Gastrocnemius medialis (tissue), 4 donors: ENCODE measurements at regions of chr16 and their contacts with region 1.

Region 1: GRCh38 chr16:21584817-21585216 is 14.6 kb upstream of the METTL9 start:
- DNase-seq: no peak
- ATAC-seq: no peak
- H3K4me3 ChIP-seq: no peak overlapping the region
- H3K27ac ChIP-seq: no peak overlapping the region
- H3K4me1 ChIP-seq: no peaks in the 10 kb centered on the region
- H3K27me3 ChIP-seq: no peaks in the 10 kb centered on the region
- CTCF ChIP-seq: no peak
- POLR2A ChIP-seq: no peak

Region 2: GRCh38 chr16:21638573-21638975 is 53.8 kb after region 1 on chr16:
- in situ Hi-C with region 1: loop called (anchors 5 to 10 kb)
- intact Hi-C with region 1: loop called (anchors 1 kb)
- DNase-seq: no peak
- ATAC-seq: no peak
- H3K4me3 ChIP-seq: no peak overlapping the region
- H3K27ac ChIP-seq: no peak overlapping the region
- H3K4me1 ChIP-seq: peaks cover 0 to 3% of the 10 kb centered on the region in 2 donors
- H3K27me3 ChIP-seq: no peaks in the 10 kb centered on the region
- CTCF ChIP-seq: no peak
- POLR2A ChIP-seq: no peak

Region 3: DNA sequence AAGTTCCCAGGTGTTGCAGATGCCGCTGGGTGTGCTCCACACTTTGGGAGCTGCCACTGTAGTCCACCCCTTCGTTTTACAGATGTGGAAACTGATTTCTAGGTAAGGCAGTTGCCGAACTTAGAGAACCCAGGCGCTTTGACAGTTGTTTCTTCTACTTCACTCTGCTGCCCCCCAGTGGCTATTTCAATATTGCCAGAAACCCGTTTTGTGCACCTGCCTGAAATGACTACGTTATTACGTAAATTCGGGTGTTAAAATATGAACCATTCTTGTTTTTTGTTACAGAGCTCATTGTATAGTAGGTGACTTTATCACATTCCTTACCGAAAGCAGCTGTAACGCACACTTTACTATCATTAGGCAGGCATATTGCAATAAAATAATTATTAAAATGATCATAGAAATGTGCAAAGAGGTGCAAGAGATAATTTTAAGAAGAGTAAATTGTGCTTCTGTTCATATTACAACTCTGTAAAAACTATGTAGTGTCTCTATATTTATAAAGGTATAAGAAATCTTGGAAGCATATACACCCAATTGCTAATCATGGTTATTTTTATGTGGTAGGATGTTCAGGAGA is 123.8 kb after region 1 on chr16:
- in situ Hi-C with region 1: loop called in 3 of 4 experiments (anchors 5 to 25 kb)
- intact Hi-C with region 1: no loop called
- DNase-seq: peak; percentile 34 to 52
- ATAC-seq: peak; percentile 45 to 61
- H3K4me3 ChIP-seq: no peak overlapping the region
- H3K27ac ChIP-seq: no peak overlapping the region
- H3K4me1 ChIP-seq: peaks cover 0 to 7% of the 10 kb centered on the region in 2 donors
- H3K27me3 ChIP-seq: no peaks in the 10 kb centered on the region
- CTCF ChIP-seq: peak; percentile 46 to 85 (median 71)
- POLR2A ChIP-seq: no peak

Region 4: GRCh38 chr16:22694887-22695382 is 1110.1 kb after region 1 on chr16:
- in situ Hi-C with region 1: loop called in 3 of 4 experiments (anchors 5 kb)
- intact Hi-C with region 1: no loop called
- DNase-seq: peak in 1 of 2 donors; percentile 27
- ATAC-seq: peak; percentile 51 to 63
- H3K4me3 ChIP-seq: no peak overlapping the region
- H3K27ac ChIP-seq: peak overlapping the region in 3 of 4 donors; percentile 55 to 74 (median 62)
- H3K4me1 ChIP-seq: peaks cover 17 to 24% of the 10 kb centered on the region in 2 donors
- H3K27me3 ChIP-seq: no peaks in the 10 kb centered on the region
- CTCF ChIP-seq: no peak
- POLR2A ChIP-seq: no peak